ENCODE measurements at regions of chr16 and their contacts with region 1.

Region 1: GRCh38 chr16:55225972-55226542 is 97.9 kb upstream of the IRX6 start:
- DNase-seq: no peak
- H3K4me3 ChIP-seq: no peak overlapping the region
- H3K27ac ChIP-seq: no peak overlapping the region
- H3K4me1 ChIP-seq: no peaks in the 10 kb centered on the region
- H3K27me3 ChIP-seq: no peaks in the 10 kb centered on the region
- CTCF ChIP-seq: no peak
- POLR2A ChIP-seq: no peak

Region 2: DNA sequence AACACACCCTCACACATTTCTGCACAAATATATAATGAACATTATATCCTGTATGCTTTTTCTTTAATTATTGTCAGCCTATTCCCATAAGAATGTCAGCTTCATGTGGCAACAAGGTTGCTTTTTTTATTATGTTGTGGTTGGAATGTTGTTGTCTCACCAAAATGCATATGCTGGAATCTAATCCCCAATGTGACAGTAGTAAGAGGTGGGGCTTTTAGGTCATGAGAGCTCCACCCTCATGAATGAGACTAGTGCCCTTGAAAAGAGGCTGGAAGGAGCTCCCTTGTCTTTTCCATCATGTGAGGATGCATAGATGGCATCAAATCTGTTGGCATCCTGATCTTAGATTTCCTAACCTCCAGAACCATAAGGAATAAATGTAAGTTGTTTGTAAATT is 33.3 kb before region 1 on chr16:
- intact Hi-C with region 1: loop called (anchors 2 kb)
- DNase-seq: no peak
- H3K4me3 ChIP-seq: no peak overlapping the region
- H3K27ac ChIP-seq: no peak overlapping the region
- H3K4me1 ChIP-seq: no peaks in the 10 kb centered on the region
- H3K27me3 ChIP-seq: peaks cover 0 to 5% of the 10 kb centered on the region in 2 donors
- CTCF ChIP-seq: no peak
- POLR2A ChIP-seq: no peak

Region 3: GRCh38 chr16:55301385-55302008 is 75.4 kb after region 1 on chr16:
- intact Hi-C with region 1: no loop called
- DNase-seq: no peak
- H3K4me3 ChIP-seq: no peak overlapping the region
- H3K27ac ChIP-seq: no peak overlapping the region
- H3K4me1 ChIP-seq: no peaks in the 10 kb centered on the region
- H3K27me3 ChIP-seq: peaks cover 0 to 4% of the 10 kb centered on the region in 2 donors
- CTCF ChIP-seq: no peak
- POLR2A ChIP-seq: no peak

Region 4: GRCh38 chr16:55944377-55944802 is 718.3 kb after region 1 on chr16:
- intact Hi-C with region 1: no loop called
- DNase-seq: peak; percentile 32 to 58
- H3K4me3 ChIP-seq: no peak overlapping the region
- H3K27ac ChIP-seq: no peak overlapping the region
- H3K4me1 ChIP-seq: no peaks in the 10 kb centered on the region
- H3K27me3 ChIP-seq: no peaks in the 10 kb centered on the region
- CTCF ChIP-seq: peak; percentile 58 to 83 (median 71)
- POLR2A ChIP-seq: no peak

Measured in breast epithelium (tissue), 4 donors.